ENCODE measurements at regions of chr5 and their contacts with region 1.

Region 1: GRCh38 chr5:121968910-121969607 is 7.3 kb downstream of the SRFBP1 start:
- DNase-seq: peak; percentile 99
- H3K4me3 Mint-ChIP-seq: peak overlapping the region; percentile 38
- H3K27ac Mint-ChIP-seq: peak overlapping the region; percentile 80
- H3K4me1 Mint-ChIP-seq: peaks cover 15% of the 10 kb centered on the region
- H3K27me3 Mint-ChIP-seq: no peaks in the 10 kb centered on the region
- CTCF ChIP-seq: no peak

Region 2: DNA sequence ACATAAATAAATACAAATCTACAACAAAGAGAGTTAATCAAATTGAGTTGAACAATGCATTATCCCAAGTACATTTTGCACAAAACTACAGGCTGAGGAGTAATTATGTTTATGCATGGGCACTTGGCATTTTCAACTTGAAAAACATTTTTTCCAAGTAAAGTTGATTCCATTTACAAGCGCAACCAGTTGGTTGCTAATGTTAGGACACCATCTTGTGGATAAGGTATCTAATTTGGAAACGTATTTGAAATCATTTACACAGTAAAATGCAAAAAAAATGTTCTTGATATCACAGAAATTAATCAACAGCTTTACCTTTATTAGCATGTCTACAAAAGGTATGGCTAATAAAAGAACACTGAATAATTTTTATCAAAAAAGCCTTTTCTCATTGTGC is 98.6 kb before region 1 on chr5:
- CTCF ChIA-PET with region 1: no interaction called
- POLR2A ChIA-PET with region 1: no interaction called
- intact Hi-C with region 1: no loop called
- DNase-seq: peak; percentile 28
- H3K4me3 Mint-ChIP-seq: no peak overlapping the region
- H3K27ac Mint-ChIP-seq: no peak overlapping the region
- H3K4me1 Mint-ChIP-seq: peaks cover 1% of the 10 kb centered on the region
- H3K27me3 Mint-ChIP-seq: no peaks in the 10 kb centered on the region
- CTCF ChIP-seq: peak; percentile 33

Region 3: DNA sequence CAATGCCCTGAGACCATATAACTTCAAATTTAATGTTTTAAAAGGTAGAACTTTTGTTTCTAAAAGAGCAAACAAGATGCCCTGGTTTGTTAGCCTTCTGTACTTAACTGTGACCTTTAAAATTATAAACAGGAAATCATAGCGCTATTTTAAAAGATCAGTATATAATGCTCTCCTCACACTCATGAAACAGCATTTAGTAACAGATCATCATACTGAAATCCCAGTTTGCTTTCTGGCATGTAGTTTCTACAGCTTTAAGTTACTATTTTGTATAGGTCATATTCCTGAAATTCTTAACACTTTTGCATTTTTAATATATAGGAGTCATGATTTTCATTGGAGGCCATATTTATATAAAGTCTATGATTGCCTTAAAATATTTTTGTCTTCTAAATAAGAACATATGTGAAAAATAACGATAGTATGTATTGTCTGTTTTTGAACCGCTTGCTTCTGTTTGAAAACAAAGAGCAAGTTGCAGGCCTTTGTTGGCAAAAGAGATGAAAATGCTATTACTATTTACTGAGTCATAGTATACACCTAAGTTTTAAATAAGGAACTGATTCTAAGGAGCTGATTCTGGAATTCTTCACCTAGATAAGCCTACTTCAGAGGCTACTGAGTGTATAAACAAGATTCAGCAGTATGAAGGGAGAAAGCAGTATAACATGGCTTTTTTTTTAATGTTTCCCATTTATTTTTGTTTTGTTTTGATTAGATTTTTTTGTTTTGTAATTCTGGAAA is 13.3 kb after region 1 on chr5:
- CTCF ChIA-PET with region 1: interaction called, 4 read pairs
- POLR2A ChIA-PET with region 1: interaction called, 14 read pairs
- intact Hi-C with region 1: no loop called
- DNase-seq: peak; percentile 34
- H3K4me3 Mint-ChIP-seq: no peak overlapping the region
- H3K27ac Mint-ChIP-seq: peak overlapping the region; percentile 70
- H3K4me1 Mint-ChIP-seq: peaks cover 23% of the 10 kb centered on the region
- H3K27me3 Mint-ChIP-seq: no peaks in the 10 kb centered on the region
- CTCF ChIP-seq: no peak

Region 4: DNA sequence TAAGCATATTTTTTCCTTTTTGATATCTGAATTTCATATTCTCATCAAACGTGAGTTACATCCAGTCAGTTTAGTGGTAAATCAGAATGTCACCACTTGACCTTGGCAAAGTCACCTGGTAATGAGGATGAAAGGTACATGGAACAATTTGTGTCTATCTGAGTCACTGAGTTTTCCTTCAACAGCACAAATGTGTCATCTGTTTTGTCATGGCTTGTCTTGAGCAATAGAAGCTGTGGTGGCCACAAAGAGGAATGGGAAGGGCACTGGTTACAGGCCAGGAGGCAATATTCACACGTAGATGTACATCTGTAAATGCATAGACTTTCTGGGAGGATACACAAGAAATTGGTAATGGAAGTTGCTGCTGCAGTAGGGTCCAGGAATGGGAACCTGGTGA is 151.9 kb after region 1 on chr5:
- CTCF ChIA-PET with region 1: interaction called, 4 read pairs
- POLR2A ChIA-PET with region 1: interaction called, 18 read pairs
- intact Hi-C with region 1: no loop called
- DNase-seq: peak; percentile 71
- H3K4me3 Mint-ChIP-seq: peak overlapping the region; percentile 45
- H3K27ac Mint-ChIP-seq: peak overlapping the region; percentile 90
- H3K4me1 Mint-ChIP-seq: peaks cover 30% of the 10 kb centered on the region
- H3K27me3 Mint-ChIP-seq: no peaks in the 10 kb centered on the region
- CTCF ChIP-seq: no peak

Region 5: DNA sequence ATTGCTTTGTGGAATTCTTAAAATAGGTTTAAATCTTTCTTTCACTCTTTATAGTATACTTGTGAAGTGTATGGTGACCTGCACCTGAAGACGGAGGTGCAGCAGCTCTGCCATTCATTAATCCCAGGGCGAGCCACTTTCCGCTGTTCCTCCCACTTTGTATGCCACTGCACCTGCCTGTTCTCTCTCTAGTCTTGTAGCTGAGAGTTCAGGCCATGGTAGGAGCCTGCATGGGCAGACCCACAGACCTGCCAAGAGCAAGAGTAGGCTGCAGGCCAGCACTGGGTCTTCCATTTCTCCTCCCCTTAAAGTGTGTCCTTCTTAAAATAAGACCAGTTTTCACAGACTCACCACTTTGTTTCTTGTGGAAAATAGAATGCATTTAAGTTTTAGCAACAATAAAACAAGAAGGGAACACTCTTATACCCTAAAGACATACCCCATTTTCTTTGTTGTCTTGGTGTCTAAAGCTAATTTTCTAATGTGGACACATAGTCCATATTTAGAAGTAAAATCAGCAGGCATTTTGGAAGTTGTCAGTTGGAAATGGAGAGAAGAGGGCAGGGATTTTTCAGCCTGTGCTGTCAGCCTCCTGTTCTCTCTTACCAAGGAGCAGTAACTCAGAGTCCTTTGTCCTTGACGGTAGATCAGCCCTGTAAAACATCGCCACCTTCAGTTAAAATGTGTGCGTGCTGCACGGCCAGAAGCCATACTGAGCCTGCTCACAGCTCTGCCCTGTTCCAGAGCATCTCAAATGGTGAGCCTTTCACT is 446.2 kb after region 1 on chr5:
- CTCF ChIA-PET with region 1: no interaction called
- POLR2A ChIA-PET with region 1: interaction called, 3 read pairs
- intact Hi-C with region 1: loop called (anchors 1 kb)
- DNase-seq: peak; percentile 86
- H3K4me3 Mint-ChIP-seq: no peak overlapping the region
- H3K27ac Mint-ChIP-seq: no peak overlapping the region
- H3K4me1 Mint-ChIP-seq: peaks cover 6% of the 10 kb centered on the region
- H3K27me3 Mint-ChIP-seq: peaks cover 17% of the 10 kb centered on the region
- CTCF ChIP-seq: peak; percentile 87

Region 6: GRCh38 chr5:122478741-122479413 is 509.8 kb after region 1 on chr5:
- CTCF ChIA-PET with region 1: no interaction called
- POLR2A ChIA-PET with region 1: no interaction called
- intact Hi-C with region 1: loop called (anchors 10 kb)
- DNase-seq: peak; percentile 100
- H3K4me3 Mint-ChIP-seq: peak overlapping the region; percentile 22
- H3K27ac Mint-ChIP-seq: peak overlapping the region; percentile 55
- H3K4me1 Mint-ChIP-seq: peaks cover 43% of the 10 kb centered on the region
- H3K27me3 Mint-ChIP-seq: no peaks in the 10 kb centered on the region
- CTCF ChIP-seq: no peak